ENCODE measurements at regions of chr7 and their contacts with region 1.

Region 1: GRCh38 chr7:130242198-130243014 is 24.3 kb upstream of the CPA2 start:
- DNase-seq: no peak

Region 2: DNA sequence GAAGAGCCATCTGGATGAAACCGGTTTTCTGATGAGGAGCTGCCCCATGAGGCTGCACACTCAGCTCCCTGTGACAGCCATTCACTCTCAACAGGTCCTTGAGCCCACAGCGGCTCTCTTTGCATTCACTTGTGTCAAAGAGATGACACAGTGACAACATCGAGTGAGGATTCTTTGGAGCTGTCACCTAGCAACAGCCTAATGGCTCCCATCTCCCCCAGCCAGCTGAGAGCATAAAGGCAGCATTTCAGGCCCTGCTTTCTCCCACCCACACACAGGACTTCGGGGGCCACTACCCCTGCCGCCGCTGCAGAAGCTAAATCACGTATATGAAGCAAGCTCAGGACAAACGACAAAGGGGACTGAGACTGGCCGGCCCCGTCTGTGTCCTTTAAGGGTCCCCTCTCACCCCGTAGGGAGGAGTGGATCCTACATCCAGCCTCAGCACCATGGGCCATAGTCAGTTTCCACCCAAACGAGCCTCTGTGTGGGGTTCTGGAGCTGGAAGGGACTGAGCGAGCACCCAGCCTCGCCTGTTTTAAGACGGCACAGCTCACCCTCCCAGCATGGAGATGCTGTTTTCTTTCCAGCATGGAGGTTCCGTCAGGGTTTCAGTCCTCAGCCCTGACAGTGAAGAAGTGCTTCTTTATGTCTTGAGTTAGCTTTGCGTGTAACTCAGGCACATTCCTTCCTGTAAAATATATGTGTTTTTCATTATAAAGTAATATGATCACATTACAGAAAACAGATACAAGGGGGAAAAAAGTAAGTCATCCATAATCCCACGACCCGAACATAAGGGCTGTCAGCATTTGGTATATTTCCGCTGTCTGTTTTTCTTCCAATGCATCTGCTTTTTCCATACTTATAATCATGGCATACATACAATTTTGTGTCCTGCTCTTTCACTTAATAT is 55.5 kb after region 1 on chr7:
- intact Hi-C with region 1: no loop called
- DNase-seq: no peak

Region 3: DNA sequence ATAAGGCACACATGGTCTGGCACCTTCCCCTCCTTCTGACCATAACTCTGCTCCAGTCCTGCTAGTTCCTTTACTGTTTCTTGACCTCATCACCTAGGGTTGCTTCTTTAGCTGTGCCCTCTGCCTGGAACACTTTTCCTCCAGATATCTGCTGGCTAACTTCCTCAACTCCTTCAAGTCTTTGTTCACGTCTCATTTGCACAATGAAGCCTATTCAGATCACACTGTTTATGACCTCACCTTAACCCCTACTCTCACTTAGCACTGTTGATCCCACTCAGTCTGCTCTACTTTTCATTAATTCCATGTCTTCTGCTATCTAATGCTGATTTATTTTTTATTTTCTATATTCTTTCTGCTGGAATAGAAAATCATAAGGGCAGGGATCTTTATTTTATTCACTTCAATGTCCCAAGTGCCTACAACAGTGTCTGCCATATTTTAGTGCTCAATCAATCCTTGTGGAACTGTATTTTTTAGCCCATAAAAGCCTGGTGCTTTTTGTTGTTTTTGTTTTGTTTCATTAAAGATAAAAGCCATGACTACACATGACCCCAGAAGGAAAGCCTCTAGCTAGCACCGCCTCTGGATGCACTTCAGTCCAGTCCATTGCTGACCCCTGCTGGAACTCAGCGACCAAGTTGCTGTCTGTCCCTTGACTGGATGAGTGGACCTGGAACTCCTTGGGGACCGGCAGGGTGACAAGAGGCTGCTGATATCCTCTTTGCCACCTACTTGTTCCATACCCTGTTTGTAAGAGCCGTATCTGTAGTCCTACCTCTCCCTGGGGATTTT is 479.3 kb after region 1 on chr7:
- intact Hi-C with region 1: loop called (anchors 2 kb)
- DNase-seq: no peak

Region 4: GRCh38 chr7:130982160-130982638 is 739.8 kb after region 1 on chr7:
- intact Hi-C with region 1: no loop called
- DNase-seq: no peak

Measured in cardiac septum (tissue), 1 donor.